MCF 10A (cell line): ENCODE measurements at regions of chr19 and their contacts with region 1.

Region 1: GRCh38 chr19:49929611-49930482 is 543 bp upstream of the NUP62 start:
- DNase-seq: peak; percentile 98
- H3K4me3 Mint-ChIP-seq: peak overlapping the region; percentile 85
- H3K27ac Mint-ChIP-seq: peak overlapping the region; percentile 90
- H3K4me1 Mint-ChIP-seq: peaks cover 16% of the 10 kb centered on the region
- H3K27me3 Mint-ChIP-seq: no peaks in the 10 kb centered on the region
- CTCF ChIP-seq: no peak

Region 2: DNA sequence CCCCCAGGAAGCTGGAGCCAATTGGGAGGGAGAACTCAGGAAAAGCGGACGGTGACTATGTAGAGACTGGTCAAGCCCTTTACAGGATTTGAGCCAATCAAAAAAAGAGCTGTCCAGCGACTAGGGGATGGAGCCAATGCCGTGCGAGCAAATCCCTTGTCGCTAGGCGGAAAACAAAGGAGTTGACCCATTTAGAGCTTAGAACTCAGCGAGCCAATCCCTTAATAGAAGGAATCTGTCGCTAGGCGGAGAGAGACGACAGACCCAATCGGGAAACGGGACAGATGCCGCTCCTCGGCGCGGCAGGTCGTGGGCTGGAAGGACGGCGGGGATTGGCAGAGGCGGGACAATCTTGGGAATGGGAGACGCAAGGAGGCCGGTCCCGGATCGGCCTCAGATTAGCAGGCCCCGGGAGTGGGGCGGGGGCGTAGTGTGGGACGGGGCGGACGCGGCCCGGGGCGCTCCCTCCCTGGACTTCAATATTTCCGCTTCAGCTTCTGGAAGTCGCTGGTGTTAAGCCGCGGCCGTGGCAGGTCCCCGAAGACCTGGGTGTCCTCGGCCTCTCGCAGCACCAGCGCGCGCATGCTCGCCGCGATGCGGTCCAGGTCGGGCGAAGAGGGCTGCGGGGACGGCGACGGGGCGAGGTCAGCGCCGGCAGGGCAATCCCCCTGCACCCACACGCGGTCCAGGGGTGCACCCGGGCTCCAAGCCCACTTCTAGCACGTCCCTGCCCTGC is 60.2 kb before region 1 on chr19:
- CTCF ChIA-PET with region 1: no interaction called
- POLR2A ChIA-PET with region 1: interaction called, 35 read pairs
- intact Hi-C with region 1: no loop called
- DNase-seq: peak; percentile 100
- H3K4me3 Mint-ChIP-seq: no peak overlapping the region
- H3K27ac Mint-ChIP-seq: no peak overlapping the region
- H3K4me1 Mint-ChIP-seq: peaks cover 5% of the 10 kb centered on the region
- H3K27me3 Mint-ChIP-seq: no peaks in the 10 kb centered on the region
- CTCF ChIP-seq: no peak

Region 3: DNA sequence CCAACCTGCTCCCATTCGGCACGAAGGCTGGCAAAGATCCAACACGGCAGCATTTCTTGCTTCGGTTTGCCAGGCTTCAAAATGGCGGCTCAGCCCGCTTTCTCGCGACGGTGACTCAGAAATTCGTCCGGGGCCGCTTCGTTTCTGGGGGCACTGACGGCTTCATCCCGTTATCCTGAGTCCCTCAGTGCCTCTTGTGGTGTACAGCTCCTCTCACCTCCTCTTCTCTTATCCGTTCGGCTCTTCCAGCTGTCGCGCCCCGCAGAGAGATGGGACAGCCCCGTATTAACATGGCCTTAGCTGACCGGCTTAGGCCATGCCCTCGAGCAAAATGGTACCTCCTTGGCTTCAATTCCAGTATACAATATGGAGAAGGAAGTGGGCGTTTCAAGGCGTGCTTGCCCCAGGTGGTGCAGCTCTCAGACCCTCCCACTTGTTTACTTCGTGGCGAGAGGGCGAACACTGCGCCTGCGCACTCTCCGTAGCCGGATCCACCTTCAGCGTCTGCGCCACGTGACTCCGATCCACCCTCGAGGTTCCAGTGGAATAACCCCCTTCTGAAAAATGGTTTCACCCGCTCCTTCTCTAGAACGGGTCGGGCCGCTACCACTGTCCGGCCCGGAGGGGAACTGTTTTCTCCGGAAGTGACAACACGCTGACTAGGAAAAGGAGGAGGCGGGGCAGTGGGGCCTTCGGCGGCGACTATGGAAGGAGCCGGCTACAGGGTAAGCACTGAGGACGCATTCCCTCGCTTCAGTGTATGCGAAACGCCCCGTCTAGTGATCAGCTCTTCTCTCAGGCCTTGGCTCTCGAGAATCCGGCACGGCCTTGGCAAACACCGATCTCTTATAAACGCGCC is 52.6 kb before region 1 on chr19 and contains the starts of genes AKT1S1 and TBC1D17:
- CTCF ChIA-PET with region 1: no interaction called
- POLR2A ChIA-PET with region 1: interaction called, 35 read pairs
- intact Hi-C with region 1: loop called (anchors 2 kb)
- DNase-seq: peak; percentile 100
- H3K4me3 Mint-ChIP-seq: no peak within 1 kb of the TSS
- H3K27ac Mint-ChIP-seq: no peak within 1 kb of the TSS
- H3K4me1 Mint-ChIP-seq: peaks cover 10% of the 10 kb centered on the region
- H3K27me3 Mint-ChIP-seq: no peaks in the 10 kb centered on the region
- CTCF ChIP-seq: no peak
- total RNA-seq, gene AKT1S1: 74.7 and 79.2 TPM in 2 replicates
- total RNA-seq, gene TBC1D17: 25.2 and 25.5 TPM in 2 replicates